SK-N-SH (cell line): ENCODE measurements at regions of chr3 and their contacts with region 1.

Region 1: DNA sequence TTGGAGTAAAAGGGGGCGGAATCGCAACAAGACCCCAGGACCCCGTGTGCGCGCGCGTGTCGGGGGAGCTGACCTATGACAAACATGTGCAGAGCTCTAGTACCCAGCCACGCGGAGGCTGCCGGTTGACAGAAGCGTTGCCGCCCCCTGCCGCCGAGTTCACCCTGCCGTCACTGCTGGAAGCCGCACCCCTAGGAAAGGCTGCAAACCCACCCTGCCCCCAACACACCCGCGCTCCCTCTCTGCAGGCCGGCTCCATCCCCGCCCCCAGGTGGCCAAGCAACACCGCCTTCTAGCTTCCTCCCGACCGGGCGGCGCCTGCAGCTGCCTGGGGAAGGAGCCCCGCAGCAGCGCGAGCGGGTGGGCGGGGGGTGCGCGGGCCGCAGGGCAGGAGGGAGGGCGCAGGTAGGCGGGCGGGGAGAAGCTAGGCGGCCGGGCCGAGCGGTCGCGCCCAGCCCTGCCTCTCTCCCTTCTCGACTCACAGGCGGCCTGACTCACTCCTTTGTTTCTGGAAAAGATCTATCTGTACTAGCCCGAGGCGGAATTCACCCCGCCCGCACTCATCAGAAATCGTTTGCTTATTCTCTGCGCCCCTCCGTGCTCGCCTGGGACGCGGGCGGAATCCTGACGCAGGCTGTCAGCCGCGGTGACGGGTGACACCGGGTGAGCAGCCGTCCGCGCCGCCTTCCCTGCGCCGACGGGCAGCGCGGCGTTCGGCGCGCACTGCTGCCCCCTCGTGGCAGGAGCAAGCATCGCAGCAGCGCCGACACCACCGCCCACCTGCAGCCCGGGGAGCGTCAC is 160.8 kb downstream of the GAP43 start:
- DNase-seq: peak; percentile 95
- H3K4me3 ChIP-seq: peak overlapping the region; percentile 59 to 66
- H3K27ac ChIP-seq: peak overlapping the region; percentile 97
- H3K4me1 ChIP-seq: peaks cover 10% of the 10 kb centered on the region in 2 experiments; a peak in 3 of 4 replicates
- H3K27me3 ChIP-seq: no peaks in the 10 kb centered on the region
- CTCF ChIP-seq: peak; percentile 96
- EP300 ChIP-seq: peak in 1 of 2 experiments; percentile 45; a peak in 2 of 4 replicates
- RAD21 ChIP-seq: peak; percentile 85

Region 2: GRCh38 chr3:115169808-115170207 is 614.3 kb before region 1 on chr3:
- CTCF ChIA-PET with region 1: interaction called, 10 read pairs
- POLR2A ChIA-PET with region 1: no interaction called
- DNase-seq: no peak
- H3K4me3 ChIP-seq: no peak overlapping the region
- H3K27ac ChIP-seq: no peak overlapping the region
- H3K4me1 ChIP-seq: no peaks in the 10 kb centered on the region
- H3K27me3 ChIP-seq: no peaks in the 10 kb centered on the region
- CTCF ChIP-seq: peak; percentile 62
- EP300 ChIP-seq: no peak
- RAD21 ChIP-seq: peak; percentile 17; the same call in 1 of the 2 replicates

Region 3: DNA sequence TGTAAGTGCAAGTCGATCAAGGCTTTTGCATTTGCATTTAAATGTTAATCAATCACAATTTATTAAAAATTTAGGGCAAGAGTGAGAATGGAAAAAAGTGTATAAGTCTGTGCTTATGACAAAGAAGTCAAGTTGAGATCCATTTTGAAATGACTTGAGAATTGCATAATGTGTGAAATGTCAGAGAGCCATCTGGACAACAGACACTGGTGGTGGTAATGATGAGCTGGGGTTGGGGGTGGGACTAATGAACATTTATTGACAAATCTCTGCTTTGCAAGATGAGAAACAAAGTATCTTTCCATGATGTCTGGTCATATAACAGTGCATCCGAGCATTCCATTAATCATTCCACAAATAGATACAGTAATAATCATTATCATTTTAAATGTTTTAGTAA is 547.6 kb before region 1 on chr3:
- CTCF ChIA-PET with region 1: interaction called, 10 read pairs
- POLR2A ChIA-PET with region 1: no interaction called
- DNase-seq: no peak
- H3K4me3 ChIP-seq: no peak overlapping the region
- H3K27ac ChIP-seq: no peak overlapping the region
- H3K4me1 ChIP-seq: peaks cover 9 to 12% of the 10 kb centered on the region in 2 experiments; a peak in 3 of 4 replicates
- H3K27me3 ChIP-seq: no peaks in the 10 kb centered on the region
- CTCF ChIP-seq: no peak
- EP300 ChIP-seq: no peak
- RAD21 ChIP-seq: no peak

Region 4: DNA sequence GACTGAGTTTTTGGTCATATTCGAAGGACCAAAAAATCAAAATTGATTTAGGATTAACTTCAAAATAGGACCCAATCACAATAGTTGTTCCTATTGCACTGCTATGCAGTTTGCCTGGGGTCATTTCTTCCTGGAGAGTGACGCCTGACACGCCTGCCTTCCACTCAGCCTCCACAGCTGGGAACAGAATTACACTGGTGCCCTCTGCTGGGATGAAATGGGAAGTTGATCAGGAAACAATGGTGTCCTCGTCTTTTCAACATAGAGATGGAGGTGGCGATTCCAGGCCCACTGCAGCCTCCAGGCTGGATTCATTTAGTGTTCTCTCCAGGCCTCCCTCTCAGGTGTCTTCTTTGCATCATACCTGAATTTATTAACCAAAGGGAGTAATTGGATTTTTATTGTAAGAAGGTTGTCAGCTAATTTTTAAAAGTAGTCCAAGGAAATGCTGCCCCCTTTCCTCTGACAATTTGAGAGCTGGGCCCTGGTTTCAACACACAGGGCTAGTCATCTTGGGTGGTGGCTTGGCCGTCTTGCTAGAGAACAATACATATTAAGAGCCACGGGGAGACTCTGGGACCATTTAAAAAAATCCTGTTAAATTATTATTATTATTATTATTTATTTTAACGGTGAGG is 91.1 kb before region 1 on chr3:
- CTCF ChIA-PET with region 1: interaction called, 85 read pairs
- POLR2A ChIA-PET with region 1: interaction called, 65 read pairs
- DNase-seq: peak; percentile 74
- H3K4me3 ChIP-seq: peak overlapping the region in 1 of 2 experiments; percentile 36; a peak in 1 of 4 replicates
- H3K27ac ChIP-seq: peak overlapping the region; percentile 5 to 98; a peak in 3 of 4 replicates
- H3K4me1 ChIP-seq: peaks cover 0 to 16% of the 10 kb centered on the region in 2 experiments; a peak in 3 of 4 replicates
- H3K27me3 ChIP-seq: no peaks in the 10 kb centered on the region
- CTCF ChIP-seq: peak; percentile 86
- EP300 ChIP-seq: peak in 1 of 2 experiments; percentile 6; a peak in 1 of 4 replicates
- RAD21 ChIP-seq: peak; percentile 99

Region 5: DNA sequence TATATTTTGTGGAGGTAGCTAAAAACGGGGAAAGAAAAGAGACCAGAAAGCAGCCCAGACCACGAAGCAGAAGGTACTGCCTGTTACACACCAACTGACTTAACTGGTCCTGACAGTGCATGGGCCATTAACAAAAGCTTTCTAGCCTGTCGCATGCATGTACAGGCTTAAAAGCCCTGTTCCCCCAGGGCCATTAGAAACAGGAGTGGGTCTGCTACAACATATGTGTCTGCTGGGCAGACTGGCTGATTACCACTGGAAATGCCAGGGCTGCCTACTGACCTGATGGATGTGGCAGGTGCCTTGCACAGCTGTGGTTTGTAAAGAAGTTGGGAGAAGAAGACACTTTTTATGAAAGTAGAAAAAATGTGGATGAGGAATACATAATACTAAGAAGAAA is 23.4 kb before region 1 on chr3:
- CTCF ChIA-PET with region 1: interaction called, 13 read pairs
- POLR2A ChIA-PET with region 1: interaction called, 7 read pairs
- DNase-seq: peak; percentile 65
- H3K4me3 ChIP-seq: no peak overlapping the region
- H3K27ac ChIP-seq: peak overlapping the region in 1 of 2 experiments; percentile 98; a peak in 2 of 4 replicates
- H3K4me1 ChIP-seq: peaks cover under 1 to 12% of the 10 kb centered on the region in 2 experiments; a peak in 3 of 4 replicates
- H3K27me3 ChIP-seq: no peaks in the 10 kb centered on the region
- CTCF ChIP-seq: no peak
- EP300 ChIP-seq: peak in 1 of 2 experiments; percentile 84; a peak in 2 of 4 replicates
- RAD21 ChIP-seq: peak; percentile 1; the same call in 1 of the 2 replicates

Region 6: DNA sequence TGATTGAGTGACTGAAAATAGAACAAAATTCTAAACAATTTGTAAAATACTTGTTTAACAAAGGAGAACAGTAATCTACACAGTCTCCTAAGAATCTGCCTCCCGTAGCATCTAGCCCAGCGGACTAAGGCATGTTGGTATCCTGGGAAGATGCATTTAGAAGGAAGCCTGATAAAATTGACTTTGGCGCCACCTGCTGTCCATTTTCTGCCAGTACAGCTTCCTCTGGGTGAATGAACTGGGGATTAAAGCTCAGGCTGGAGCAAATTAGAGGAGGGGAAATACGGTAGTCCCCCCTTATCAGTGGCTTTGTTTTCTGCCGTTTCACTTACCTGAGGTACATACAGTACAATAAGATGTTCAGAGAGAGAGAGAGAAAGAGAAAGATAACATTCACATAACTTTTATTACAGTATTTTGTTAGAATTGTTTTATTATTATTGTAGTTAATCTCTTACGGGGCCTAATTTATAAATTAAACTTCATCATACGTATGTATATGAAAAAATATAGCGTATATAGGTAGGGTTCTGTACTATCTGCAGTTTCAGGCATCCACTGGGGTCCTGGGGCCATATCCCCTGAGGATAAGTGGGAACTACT is 30.7 kb after region 1 on chr3:
- CTCF ChIA-PET with region 1: interaction called, 21 read pairs
- POLR2A ChIA-PET with region 1: no interaction called
- DNase-seq: peak; percentile 68
- H3K4me3 ChIP-seq: no peak overlapping the region; a peak in 1 of 4 replicates
- H3K27ac ChIP-seq: no peak overlapping the region
- H3K4me1 ChIP-seq: no peaks in the 10 kb centered on the region
- H3K27me3 ChIP-seq: no peaks in the 10 kb centered on the region
- CTCF ChIP-seq: peak; percentile 95
- EP300 ChIP-seq: no peak
- RAD21 ChIP-seq: peak; percentile 91

Region 7: DNA sequence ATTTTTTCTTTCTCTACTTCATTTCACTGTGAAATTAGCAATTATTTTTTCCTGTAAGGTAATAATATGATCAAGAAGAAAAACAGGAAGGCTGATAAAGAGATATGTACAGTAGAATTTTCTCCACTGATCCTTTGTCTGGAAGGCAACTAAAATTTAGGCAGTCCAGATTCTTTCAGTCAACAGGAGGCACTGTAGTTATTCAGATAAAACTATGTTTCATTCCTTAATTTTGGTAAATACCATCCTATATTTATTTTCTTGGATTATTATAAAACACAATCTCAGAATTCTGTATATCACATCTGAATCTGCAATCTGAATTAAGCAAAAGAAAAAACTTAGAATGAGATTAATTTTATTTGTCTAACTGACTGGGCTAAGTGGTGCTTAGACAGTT is 317.9 kb after region 1 on chr3:
- CTCF ChIA-PET with region 1: no interaction called
- POLR2A ChIA-PET with region 1: no interaction called
- DNase-seq: no peak
- H3K4me3 ChIP-seq: no peak overlapping the region
- H3K27ac ChIP-seq: no peak overlapping the region
- H3K4me1 ChIP-seq: peaks cover 8 to 11% of the 10 kb centered on the region in 2 experiments; a peak in 3 of 4 replicates
- H3K27me3 ChIP-seq: no peaks in the 10 kb centered on the region
- CTCF ChIP-seq: peak; percentile 27; the same call in 1 of the 2 replicates
- EP300 ChIP-seq: no peak
- RAD21 ChIP-seq: peak; percentile 48